ENCODE measurements at regions of chr5 and their contacts with region 1.

Region 1: GRCh38 chr5:172868924-172869591 is 35.0 kb downstream of the ERGIC1 start:
- DNase-seq: peak; percentile 95

Region 2: DNA sequence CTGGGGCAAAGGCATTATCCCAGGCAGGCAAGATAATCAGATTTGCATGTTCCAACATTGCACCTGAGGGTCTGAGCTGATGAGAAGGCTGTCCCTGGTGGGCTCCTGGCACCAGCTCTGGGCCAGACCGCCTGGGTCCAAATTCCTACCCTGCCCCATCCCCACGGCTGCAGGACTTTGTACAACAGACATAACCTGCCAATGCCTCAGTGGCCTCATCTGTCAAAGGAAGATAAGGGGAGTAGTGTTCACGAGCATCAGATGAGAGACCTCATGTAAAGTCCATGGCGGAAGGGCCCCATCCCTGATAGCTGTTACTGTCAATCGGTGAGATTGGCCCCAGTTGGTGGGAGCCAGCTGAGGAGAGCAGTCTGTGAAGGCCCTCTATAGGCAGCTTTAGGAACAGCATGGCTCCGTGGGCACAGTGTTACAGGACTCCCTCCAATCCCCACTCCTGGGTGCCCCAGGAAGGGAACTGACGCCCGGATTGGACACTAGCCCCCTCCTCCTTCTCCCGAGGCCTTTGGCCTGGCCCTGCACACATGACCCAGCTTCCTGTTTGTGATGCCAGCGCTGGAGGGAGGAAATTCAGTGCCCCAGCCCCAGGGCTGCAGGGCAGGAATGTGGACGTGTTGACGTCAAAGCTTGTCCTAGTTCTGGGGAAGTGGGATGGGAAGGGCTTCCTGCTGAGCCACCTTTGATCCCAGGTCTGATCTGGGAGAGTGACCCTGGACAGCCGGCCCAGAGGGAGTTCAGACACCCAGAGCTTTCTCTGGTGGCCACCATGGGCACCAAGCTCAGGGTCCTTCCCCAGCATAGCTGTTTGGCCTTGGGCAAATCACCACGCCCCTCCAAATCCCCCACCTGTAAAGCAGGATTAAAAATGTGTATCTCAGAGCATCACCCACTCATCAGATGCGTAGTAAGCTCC is 154.3 kb before region 1 on chr5:
- intact Hi-C with region 1: loop called in 1 of 2 experiments (anchors 5 kb)
- DNase-seq: peak; percentile 95

Region 3: GRCh38 chr5:172748341-172748843 is 120.7 kb before region 1 on chr5:
- intact Hi-C with region 1: no loop called
- DNase-seq: peak; percentile 94

Region 4: DNA sequence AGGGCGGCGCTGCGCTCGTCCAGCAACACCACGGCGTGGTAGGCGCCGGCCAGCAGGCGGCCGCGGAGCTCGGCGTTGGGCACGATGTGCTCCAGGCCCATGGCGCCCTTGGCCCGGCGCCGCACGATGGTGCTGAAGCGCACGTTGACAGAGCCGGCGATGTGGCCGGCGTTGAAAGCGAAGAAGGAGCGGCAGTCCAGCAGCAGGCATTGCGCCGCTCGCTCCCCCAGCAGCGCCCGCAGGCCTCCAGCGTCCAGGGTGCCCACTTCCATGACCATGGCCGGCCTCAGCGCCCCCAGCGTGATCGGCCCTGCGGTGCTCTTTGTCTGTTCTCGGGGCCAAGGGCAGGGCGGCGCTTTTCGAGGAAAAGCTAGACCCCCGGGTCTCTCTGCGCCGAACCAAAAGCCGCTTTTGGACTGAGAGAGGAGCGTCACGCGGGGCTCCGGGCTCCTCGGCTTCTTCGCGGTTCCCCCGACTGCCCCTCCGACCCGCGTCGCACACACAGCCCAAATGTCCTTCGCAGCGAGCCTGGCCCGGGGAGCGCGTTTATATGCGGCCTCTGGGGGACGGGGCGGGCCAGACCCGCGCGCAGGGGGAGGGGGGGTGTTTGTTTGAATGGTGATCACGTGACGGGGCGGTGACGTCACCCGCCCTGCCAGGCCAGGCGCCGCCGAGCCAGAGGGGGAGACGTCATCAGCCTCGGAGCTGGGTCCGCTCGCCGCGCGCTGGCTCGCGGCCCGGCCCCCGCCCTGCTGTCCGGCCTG is 98.2 kb before region 1 on chr5 and contains the start of gene DUSP1:
- intact Hi-C with region 1: loop called in 1 of 2 experiments (anchors 5 kb)
- DNase-seq: peak; percentile 100
- total RNA-seq, gene DUSP1: 445 to 1,411 TPM

Region 5: GRCh38 chr5:172795318-172795977 is 73.6 kb before region 1 on chr5:
- intact Hi-C with region 1: loop called in 1 of 2 experiments (anchors 5 kb)
- DNase-seq: peak; percentile 98

Region 6: GRCh38 chr5:172839669-172840431 is 29.2 kb before region 1 on chr5:
- intact Hi-C with region 1: no loop called
- DNase-seq: no peak

Region 7: GRCh38 chr5:172902497-172903200 is 33.6 kb after region 1 on chr5:
- intact Hi-C with region 1: loop called in 1 of 2 experiments (anchors 5 kb)
- DNase-seq: peak; percentile 91